ENCODE measurements at regions of chr9 and their contacts with region 1.

Region 1: GRCh38 chr9:137551651-137552384 is at the start of gene MRPL41:
- DNase-seq: peak; percentile 86
- H3K4me3 ChIP-seq: peak within 1 kb of the TSS; percentile 74 to 91 (median 80)
- H3K27ac ChIP-seq: peak within 1 kb of the TSS; percentile 31
- H3K4me1 ChIP-seq: peaks cover 16% of the 10 kb centered on the region
- H3K27me3 ChIP-seq: no peaks in the 10 kb centered on the region
- CTCF ChIP-seq: no peak
- total RNA-seq, gene MRPL41: 31.3 to 46.1 TPM

Region 2: GRCh38 chr9:137534256-137535117 is 17.3 kb before region 1 on chr9:
- CTCF ChIA-PET with region 1: no interaction called
- dilution Hi-C with region 1: no loop called
- in situ Hi-C with region 1: no loop called
- intact Hi-C with region 1: loop called (anchors 2 kb)
- DNase-seq: peak; percentile 32
- H3K4me3 ChIP-seq: no peak overlapping the region
- H3K27ac ChIP-seq: no peak overlapping the region
- H3K4me1 ChIP-seq: no peaks in the 10 kb centered on the region
- H3K27me3 ChIP-seq: no peaks in the 10 kb centered on the region
- CTCF ChIP-seq: peak; percentile 56 to 73

Measured in mammary epithelial cell (primary cell).